ENCODE measurements at regions of chr18 and their contacts with region 1.

Region 1: DNA sequence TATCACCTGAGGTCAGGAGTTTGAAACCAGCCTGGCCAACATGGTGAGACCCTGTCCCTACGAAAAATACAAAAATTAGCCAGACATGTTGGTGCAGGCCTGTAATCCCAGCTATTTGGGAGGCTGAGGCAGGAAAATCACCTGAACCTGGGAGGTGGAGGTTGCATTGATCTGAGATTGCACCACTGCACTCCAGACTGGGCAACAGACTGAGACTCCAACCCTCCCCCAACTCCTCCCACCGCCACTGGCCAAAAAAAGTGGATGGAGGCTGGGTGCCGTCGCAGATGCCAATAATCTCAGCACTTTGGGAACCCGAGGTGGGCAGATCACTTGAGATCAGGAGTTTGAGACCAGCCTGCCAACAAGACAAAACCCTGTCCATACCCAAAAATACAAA is 10.1 kb upstream of the SPIRE1 start:
- DNase-seq: no peak
- ATAC-seq: no peak
- H3K4me3 ChIP-seq: no peak overlapping the region
- H3K27ac ChIP-seq: no peak overlapping the region
- H3K4me1 ChIP-seq: peaks cover 8% of the 10 kb centered on the region
- H3K27me3 ChIP-seq: no peaks in the 10 kb centered on the region
- CTCF ChIP-seq: no peak

Region 2: DNA sequence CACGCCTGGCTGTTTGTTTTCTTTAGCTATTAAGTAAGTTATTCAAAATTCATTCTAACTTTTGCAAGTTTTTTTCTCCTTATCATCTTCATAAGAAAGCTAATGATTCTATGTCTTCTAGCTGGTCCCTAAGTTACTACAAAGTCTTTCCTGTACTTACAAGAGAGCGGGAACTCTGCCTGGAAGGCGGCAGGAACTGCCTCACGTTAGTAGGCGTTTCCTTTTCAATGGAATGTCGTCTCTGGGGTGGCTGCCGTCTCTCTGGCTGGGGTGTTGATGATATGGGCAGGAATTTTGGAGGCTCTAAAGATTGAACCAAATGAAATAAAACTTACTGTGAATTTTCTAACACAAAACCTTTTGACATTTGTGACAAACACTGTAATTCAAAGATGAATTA is 204.8 kb before region 1 on chr18:
- CTCF ChIA-PET with region 1: no interaction called
- POLR2A ChIA-PET with region 1: interaction called, 14 read pairs
- intact Hi-C with region 1: no loop called
- DNase-seq: no peak
- ATAC-seq: no peak
- H3K4me3 ChIP-seq: no peak overlapping the region
- H3K27ac ChIP-seq: no peak overlapping the region
- H3K4me1 ChIP-seq: no peaks in the 10 kb centered on the region
- H3K27me3 ChIP-seq: no peaks in the 10 kb centered on the region
- CTCF ChIP-seq: no peak

Region 3: GRCh38 chr18:13279181-13280069 is 611.4 kb after region 1 on chr18:
- CTCF ChIA-PET with region 1: no interaction called
- POLR2A ChIA-PET with region 1: no interaction called
- intact Hi-C with region 1: no loop called
- DNase-seq: no peak
- ATAC-seq: no peak
- H3K4me3 ChIP-seq: no peak overlapping the region
- H3K27ac ChIP-seq: no peak overlapping the region
- H3K4me1 ChIP-seq: no peaks in the 10 kb centered on the region
- H3K27me3 ChIP-seq: peaks cover 78% of the 10 kb centered on the region
- CTCF ChIP-seq: no peak